ENCODE measurements at regions of chr14 and their contacts with region 1.

Region 1: DNA sequence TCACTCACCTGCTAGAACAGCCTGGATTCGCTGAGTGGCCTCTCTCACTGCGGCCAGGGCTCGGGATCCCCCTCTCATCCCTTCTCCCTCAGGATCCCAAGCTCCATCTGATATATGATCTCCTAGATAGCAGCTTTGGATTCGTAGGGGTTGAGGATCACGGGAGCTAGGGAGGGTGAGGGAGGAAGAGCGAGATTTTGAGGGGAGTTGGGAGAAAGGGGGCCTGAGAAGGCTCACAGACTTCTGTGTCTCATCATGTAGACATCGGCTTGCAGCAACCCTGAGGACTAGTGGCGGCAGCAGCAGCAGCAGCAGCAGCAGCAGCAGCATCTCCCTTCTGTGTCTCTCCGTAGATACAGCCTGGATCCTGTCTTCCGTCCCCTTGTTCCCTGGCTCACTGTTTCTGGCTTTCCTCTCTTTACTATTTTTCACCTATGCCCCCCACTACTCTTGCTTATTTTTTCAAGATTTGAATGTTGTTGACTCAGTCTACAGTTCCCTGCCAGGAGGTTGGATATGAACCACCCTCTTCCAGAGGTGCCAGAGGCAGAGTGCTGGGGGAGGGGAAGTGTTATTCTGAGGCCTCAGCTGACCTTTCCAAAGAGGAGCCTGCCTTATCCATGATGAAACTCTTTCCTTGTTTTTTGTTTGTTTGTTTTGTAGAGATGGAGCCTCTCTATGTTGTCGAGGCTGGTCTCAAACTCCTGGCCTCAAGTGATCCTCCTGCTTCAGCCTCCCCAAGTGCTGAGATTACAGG is at the start of gene CIROP:
- DNase-seq: no peak
- ATAC-seq: peak in 1 of 2 experiments; percentile 5; a peak in 1 of 6 replicates
- H3K4me3 ChIP-seq: no peak within 1 kb of the TSS
- H3K27ac ChIP-seq: no peak within 1 kb of the TSS
- H3K4me1 ChIP-seq: 0 out of 3 replicates have a peak, but pooled peaks cover 4% of the 10 kb centered on the region
- CTCF ChIP-seq: no peak
- EP300 ChIP-seq: no peak
- POLR2A ChIP-seq: no peak
- RAD21 ChIP-seq: no peak
- polyA plus RNA-seq, gene CIROP: 0.03 TPM in 1 of 2 replicates, not detected in the other

Region 2: GRCh38 chr14:22549981-22550673 is 554.6 kb before region 1 on chr14:
- CTCF ChIA-PET with region 1: no interaction called
- POLR2A ChIA-PET with region 1: no interaction called
- DNase-seq: no peak
- ATAC-seq: no peak
- H3K4me3 ChIP-seq: no peak overlapping the region
- H3K27ac ChIP-seq: no peak overlapping the region
- H3K4me1 ChIP-seq: no peaks in the 10 kb centered on the region
- CTCF ChIP-seq: no peak
- EP300 ChIP-seq: no peak
- POLR2A ChIP-seq: no peak
- RAD21 ChIP-seq: no peak

Region 3: DNA sequence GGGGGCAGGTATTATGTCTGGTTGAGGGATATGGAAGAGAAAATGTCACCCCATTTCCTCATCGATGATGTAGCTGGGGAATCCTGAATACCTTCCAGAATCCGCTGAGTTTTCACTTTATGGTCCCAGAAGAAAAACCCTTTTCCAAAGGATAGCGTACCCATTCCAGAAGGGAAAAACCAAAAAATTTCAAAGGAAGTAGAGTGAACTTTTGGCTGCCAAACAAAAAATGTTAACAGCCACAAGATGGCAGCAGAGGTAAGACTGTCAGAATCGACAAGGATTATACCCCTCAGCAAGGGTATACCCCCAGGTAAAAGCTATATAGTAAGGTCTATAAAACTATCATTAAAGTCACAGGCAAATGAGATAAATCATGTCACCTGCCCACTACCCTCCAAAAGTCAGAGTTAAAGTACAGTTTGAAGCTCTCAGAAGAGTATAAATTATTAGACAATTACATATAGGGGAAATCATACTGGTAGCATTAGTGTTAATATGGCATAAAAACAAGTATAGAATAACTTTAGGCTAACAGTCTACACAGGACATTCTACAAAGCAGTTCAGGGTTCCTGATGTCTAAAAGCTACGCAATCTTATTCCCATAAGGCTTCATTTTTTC is 27.9 kb before region 1 on chr14:
- CTCF ChIA-PET with region 1: interaction called, 126 read pairs
- POLR2A ChIA-PET with region 1: no interaction called
- DNase-seq: peak in 1 of 2 experiments; percentile 33
- ATAC-seq: peak; percentile 51 to 55; a peak in 3 of 6 replicates
- H3K4me3 ChIP-seq: no peak overlapping the region
- H3K27ac ChIP-seq: no peak overlapping the region; a peak in 1 of 6 replicates
- H3K4me1 ChIP-seq: peaks cover 49% of the 10 kb centered on the region
- CTCF ChIP-seq: peak; percentile 80
- EP300 ChIP-seq: no peak
- POLR2A ChIP-seq: no peak
- RAD21 ChIP-seq: peak; percentile 48 to 56; a peak in 4 of 5 replicates